Right cardiac atrium (tissue), 5 donors: ENCODE measurements at regions of chr9 and their contacts with region 1.

Region 1: GRCh38 chr9:8895861-8896224 is 1096.3 kb upstream of the DMAC1 start:
- DNase-seq: no peak
- ATAC-seq: peak; percentile 66 to 71
- H3K4me3 ChIP-seq: no peak overlapping the region
- H3K27ac ChIP-seq: no peak overlapping the region
- H3K4me1 ChIP-seq: no peaks in the 10 kb centered on the region
- H3K27me3 ChIP-seq: peaks cover 2% of the 10 kb centered on the region

Region 2: GRCh38 chr9:8486095-8486494 is 409.7 kb before region 1 on chr9:
- intact Hi-C with region 1: loop called in 3 of 4 experiments (anchors 10 kb)
- DNase-seq: peak; percentile 14 to 49 (median 32)
- ATAC-seq: peak in 1 of 2 donors; percentile 40
- H3K4me3 ChIP-seq: no peak overlapping the region
- H3K27ac ChIP-seq: no peak overlapping the region
- H3K4me1 ChIP-seq: no peaks in the 10 kb centered on the region
- H3K27me3 ChIP-seq: no peaks in the 10 kb centered on the region

Region 3: GRCh38 chr9:8552732-8553131 is 343.1 kb before region 1 on chr9:
- intact Hi-C with region 1: no loop called
- DNase-seq: no peak
- ATAC-seq: no peak
- H3K4me3 ChIP-seq: no peak overlapping the region
- H3K27ac ChIP-seq: no peak overlapping the region
- H3K4me1 ChIP-seq: no peaks in the 10 kb centered on the region
- H3K27me3 ChIP-seq: no peaks in the 10 kb centered on the region